Pancreas (tissue), 10 donors: ENCODE measurements at regions of chr14 and their contacts with region 1.

Region 1: GRCh38 chr14:91286530-91286937 is 42.0 kb upstream of the GPR68 start:
- DNase-seq: peak; percentile 29 to 87 (median 63)
- ATAC-seq: peak; percentile 71 to 96 (median 88)
- H3K4me3 ChIP-seq: no peak overlapping the region
- H3K27ac ChIP-seq: no peak overlapping the region
- H3K4me1 ChIP-seq: no peaks in the 10 kb centered on the region
- H3K27me3 ChIP-seq: no peaks in the 10 kb centered on the region
- CTCF ChIP-seq: peak; percentile 81 to 90 (median 87)

Region 2: GRCh38 chr14:90399541-90400444 is 886.7 kb before region 1 on chr14:
- intact Hi-C with region 1: no loop called
- DNase-seq: peak; percentile 84 to 91 (median 90)
- ATAC-seq: peak; percentile 48 to 86 (median 76)
- H3K4me3 ChIP-seq: peak overlapping the region in 2 of 4 donors; percentile 63 to 93
- H3K27ac ChIP-seq: peak overlapping the region in 2 of 4 donors; percentile 87 to 88
- H3K4me1 ChIP-seq: peaks cover 11 to 23% (median 18%) of the 10 kb centered on the region in 3 donors
- H3K27me3 ChIP-seq: no peaks in the 10 kb centered on the region
- CTCF ChIP-seq: peak; percentile 97 to 99 (median 98)

Region 3: GRCh38 chr14:90903101-90903500 is 383.4 kb before region 1 on chr14:
- intact Hi-C with region 1: loop called in 1 of 3 experiments (anchors 10 kb)
- DNase-seq: peak in 3 of 6 donors; percentile 11 to 54 (median 30)
- ATAC-seq: peak; percentile 58 to 93 (median 90)
- H3K4me3 ChIP-seq: no peak overlapping the region
- H3K27ac ChIP-seq: no peak overlapping the region
- H3K4me1 ChIP-seq: no peaks in the 10 kb centered on the region
- H3K27me3 ChIP-seq: no peaks in the 10 kb centered on the region
- CTCF ChIP-seq: peak in 3 of 4 donors; percentile 41 to 54 (median 52)

Region 4: DNA sequence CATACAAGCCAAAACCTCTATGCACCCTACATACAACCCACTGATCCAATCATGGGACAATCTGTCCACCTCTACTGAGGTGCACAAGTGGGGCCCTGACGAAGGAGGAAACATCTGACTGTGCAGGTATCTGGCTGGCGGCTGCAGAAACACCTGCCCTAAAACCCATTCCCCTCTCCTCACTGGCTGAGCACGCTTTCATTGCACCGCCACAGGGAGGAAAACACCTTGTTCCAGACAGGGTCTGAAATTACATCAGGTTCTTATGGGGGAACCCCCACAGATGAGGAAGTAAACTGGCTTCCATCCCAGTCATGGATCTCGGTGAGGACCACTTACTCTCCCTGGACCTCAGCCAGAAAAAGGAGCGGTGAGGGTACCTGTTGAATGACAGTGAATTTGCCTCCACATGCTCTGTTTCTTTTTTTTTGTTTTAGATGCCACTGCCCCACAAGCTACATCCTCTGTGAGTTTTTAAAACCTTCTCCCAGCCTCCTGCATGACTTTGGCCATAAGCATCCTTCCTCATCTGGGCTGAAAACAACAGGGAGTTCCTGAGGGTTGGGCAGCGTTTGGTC is 196.5 kb before region 1 on chr14:
- intact Hi-C with region 1: no loop called
- DNase-seq: no peak
- ATAC-seq: no peak
- H3K4me3 ChIP-seq: no peak overlapping the region
- H3K27ac ChIP-seq: no peak overlapping the region
- H3K4me1 ChIP-seq: no peaks in the 10 kb centered on the region
- H3K27me3 ChIP-seq: no peaks in the 10 kb centered on the region
- CTCF ChIP-seq: no peak

Region 5: DNA sequence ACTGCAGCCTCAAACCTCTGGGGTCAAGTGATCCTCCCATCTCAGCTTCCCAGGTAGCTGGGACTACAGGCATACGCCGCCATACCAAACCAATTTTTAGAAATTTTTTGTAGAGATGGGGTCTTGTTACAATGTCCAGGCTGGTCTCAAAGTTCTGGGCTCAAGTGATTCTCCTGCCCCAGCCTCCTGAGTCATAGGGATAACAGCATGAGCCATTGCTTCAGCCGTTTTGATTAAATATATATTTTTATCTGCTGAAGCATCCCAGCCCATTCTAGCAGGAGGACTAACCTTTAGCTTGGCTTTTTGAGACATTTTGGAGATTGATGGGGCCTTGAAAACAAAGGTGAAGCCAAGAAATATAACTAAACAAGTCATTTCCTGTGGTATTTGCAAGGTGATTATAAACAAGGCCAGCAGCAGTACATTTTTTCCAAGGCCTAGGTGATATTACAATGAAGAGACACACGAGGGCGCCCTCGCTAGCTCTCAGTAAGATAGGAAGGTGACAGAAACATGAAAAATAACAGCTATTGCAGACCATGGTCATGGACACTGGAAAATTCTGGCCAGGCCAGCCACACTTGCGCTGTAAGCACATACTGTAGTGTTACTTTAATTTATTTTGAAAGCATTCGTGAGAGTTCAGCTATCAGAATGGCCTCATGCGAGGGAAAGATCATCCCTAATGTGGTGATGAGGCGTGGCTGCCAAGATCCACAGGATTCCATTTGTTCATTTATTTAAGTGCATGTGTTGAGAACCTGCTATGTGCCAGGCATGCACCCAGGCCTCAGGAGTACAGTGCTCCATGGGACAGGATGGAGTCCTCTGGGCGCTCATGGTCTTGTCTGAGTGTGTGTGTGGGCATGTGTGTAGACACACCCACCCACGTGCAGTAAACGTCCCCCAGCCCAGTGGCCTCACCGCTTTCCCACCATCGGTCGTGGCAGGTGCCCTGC is 109.2 kb before region 1 on chr14:
- intact Hi-C with region 1: loop called in 1 of 3 experiments (anchors 10 kb)
- DNase-seq: peak in 2 of 6 donors; percentile 19 to 58
- ATAC-seq: peak; percentile 40 to 87 (median 78)
- H3K4me3 ChIP-seq: no peak overlapping the region
- H3K27ac ChIP-seq: no peak overlapping the region
- H3K4me1 ChIP-seq: no peaks in the 10 kb centered on the region
- H3K27me3 ChIP-seq: no peaks in the 10 kb centered on the region
- CTCF ChIP-seq: peak; percentile 52 to 67 (median 60)